Thyroid gland (tissue), 4 donors: ENCODE measurements at regions of chr11 and their contacts with region 1.

Region 1: DNA sequence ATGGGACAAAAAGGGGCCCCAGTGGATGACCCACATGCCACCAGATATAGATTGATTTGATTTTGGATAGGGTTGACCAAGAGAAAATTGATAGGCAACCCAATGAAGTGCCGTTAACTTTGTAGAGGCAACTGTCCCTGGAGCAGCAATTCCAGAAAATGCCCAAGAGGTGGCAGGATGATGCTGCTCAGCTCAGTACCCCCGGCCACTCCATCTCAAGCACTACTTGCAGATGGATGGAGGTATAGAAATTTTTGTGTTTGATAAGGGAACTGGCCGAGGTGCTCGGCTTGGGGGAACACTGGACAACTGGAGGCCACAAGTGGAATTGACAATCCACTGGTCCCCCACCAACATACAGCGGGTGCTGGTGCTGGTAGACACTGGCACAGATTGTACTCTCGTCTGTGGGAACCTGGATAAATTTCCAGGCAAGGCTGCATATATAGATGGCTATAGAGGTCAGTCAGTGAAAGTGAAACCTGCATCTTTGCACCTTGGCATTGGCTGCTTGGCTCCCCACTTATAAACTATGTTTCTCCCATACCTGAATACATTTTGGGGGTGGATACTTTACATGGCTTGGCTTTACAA is 86.3 kb downstream of the CCDC83 start:
- DNase-seq: peak; percentile 55 to 58
- H3K4me3 ChIP-seq: no peak overlapping the region
- H3K27ac ChIP-seq: no peak overlapping the region
- H3K4me1 ChIP-seq: peaks cover 0 to 6% of the 10 kb centered on the region in 2 donors
- H3K27me3 ChIP-seq: no peaks in the 10 kb centered on the region
- CTCF ChIP-seq: peak in 5 of 6 experiments; percentile 57 to 71 (median 66)
- POLR2A ChIP-seq: no peak

Region 2: GRCh38 chr11:86218125-86219084 is 276.9 kb after region 1 on chr11:
- intact Hi-C with region 1: loop called (anchors 5 kb)
- DNase-seq: peak; percentile 57 to 72
- H3K4me3 ChIP-seq: no peak overlapping the region
- H3K27ac ChIP-seq: no peak overlapping the region
- H3K4me1 ChIP-seq: no peaks in the 10 kb centered on the region
- H3K27me3 ChIP-seq: no peaks in the 10 kb centered on the region
- CTCF ChIP-seq: peak; percentile 65 to 91 (median 82)
- POLR2A ChIP-seq: no peak

Region 3: GRCh38 chr11:86291466-86292262 is 350.2 kb after region 1 on chr11:
- intact Hi-C with region 1: loop called (anchors 5 kb)
- DNase-seq: peak; percentile 64 to 76
- H3K4me3 ChIP-seq: no peak overlapping the region
- H3K27ac ChIP-seq: no peak overlapping the region
- H3K4me1 ChIP-seq: no peaks in the 10 kb centered on the region
- H3K27me3 ChIP-seq: no peaks in the 10 kb centered on the region
- CTCF ChIP-seq: peak in 5 of 6 experiments; percentile 31 to 89 (median 59)
- POLR2A ChIP-seq: no peak